Tibial artery (tissue), 4 donors: ENCODE measurements at regions of chr3 and their contacts with region 1.

Region 1: DNA sequence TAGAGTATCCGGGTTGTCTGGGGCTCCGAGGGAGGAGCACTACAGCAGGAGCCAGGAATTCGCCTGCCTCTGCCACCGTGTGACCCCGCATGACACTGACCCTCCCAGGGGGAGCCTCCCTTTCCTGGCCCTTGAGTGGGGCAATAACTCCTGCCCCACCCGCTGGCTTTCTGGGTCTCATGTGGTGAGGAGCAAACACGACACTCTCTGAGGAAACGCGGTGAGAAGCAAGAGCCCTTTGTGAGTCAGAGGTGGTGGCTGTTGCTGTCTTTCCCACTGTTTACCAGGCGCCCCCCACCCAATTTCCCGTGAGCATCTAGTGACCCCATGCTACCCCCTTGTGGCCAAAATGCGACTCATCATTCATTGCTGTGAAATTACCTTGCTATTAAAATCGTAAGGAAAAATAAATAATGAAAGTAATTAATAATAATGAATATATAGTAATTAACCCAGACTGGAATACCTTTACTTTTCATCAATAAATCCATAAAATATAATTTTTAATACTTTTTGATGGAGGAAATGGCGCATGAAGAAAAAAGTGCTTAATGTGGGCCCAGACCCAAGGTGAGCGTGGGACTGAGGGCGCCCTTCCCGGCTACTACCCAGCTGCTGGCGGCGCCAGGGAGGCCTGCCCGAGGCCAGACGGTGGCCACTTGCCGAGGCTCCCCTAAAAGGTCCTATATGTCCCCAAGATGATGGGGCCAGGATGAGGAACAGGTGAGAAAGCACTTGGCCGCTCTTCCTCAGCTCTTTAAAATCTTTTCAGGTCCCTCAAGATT is 29.3 kb downstream of the CCNL1 start:
- DNase-seq: peak; percentile 63 to 76
- H3K4me3 ChIP-seq: no peak overlapping the region
- H3K27ac ChIP-seq: peak overlapping the region; percentile 72 to 87
- H3K4me1 ChIP-seq: peaks cover 0 to 55% (median 42%) of the 10 kb centered on the region in 4 donors
- H3K27me3 ChIP-seq: no peaks in the 10 kb centered on the region
- CTCF ChIP-seq: peak; percentile 32 to 38

Region 2: GRCh38 chr3:156554842-156555687 is 575.6 kb before region 1 on chr3 and contains the start of gene SSR3:
- intact Hi-C with region 1: loop called (anchors 5 kb)
- DNase-seq: peak; percentile 99 to 100
- H3K4me3 ChIP-seq: peak within 1 kb of the TSS; percentile 84 to 85
- H3K27ac ChIP-seq: peak within 1 kb of the TSS; percentile 76 to 85
- H3K4me1 ChIP-seq: peaks cover 0 to 38% (median 19%) of the 10 kb centered on the region in 4 donors
- H3K27me3 ChIP-seq: no peaks in the 10 kb centered on the region
- CTCF ChIP-seq: peak; percentile 46 to 78

Region 3: GRCh38 chr3:156826144-156826895 is 304.3 kb before region 1 on chr3 and contains the start of gene LEKR1:
- intact Hi-C with region 1: loop called (anchors 10 kb)
- DNase-seq: peak; percentile 76 to 91
- H3K4me3 ChIP-seq: peak within 1 kb of the TSS; percentile 67 to 74
- H3K27ac ChIP-seq: peak within 1 kb of the TSS; percentile 84 to 89
- H3K4me1 ChIP-seq: peaks cover 0 to 7% (median 3%) of the 10 kb centered on the region in 4 donors
- H3K27me3 ChIP-seq: no peaks in the 10 kb centered on the region
- CTCF ChIP-seq: no peak

Region 4: DNA sequence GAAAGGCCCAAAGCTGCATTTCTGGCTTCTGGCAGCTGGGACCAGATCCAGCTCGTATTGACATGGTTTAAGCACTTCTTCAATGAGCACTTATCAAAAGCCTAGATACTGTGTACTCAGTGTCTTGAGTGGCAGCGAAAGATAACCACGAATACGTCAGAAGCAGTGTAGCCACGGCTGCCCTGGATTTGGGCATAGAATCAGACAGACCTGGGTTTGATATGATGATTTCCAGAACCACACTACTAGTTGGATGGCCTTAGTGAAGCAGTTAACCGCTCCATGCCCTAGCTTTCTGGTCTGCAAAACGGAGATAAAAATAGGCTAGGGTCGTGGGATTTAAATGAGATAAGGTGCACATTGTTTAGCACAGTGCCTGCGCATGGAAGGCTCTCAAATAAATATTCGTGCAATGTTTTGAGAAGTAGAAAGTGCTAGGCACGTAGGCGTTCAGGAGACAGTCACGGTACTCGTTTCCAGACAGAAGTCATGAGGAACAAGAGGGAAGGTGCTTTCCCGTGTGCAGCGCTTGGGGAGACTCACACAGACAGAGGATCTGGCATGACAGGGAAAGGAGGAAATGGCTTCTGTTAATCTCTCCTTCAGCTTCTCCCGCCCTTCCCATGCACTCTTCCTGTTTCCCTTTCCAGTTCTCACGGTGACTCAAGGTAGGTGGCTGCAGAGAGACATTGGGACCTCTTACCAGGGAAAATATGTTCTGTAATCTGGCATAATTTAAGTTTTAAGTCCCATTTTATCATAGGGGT is 41.0 kb before region 1 on chr3:
- intact Hi-C with region 1: loop called (anchors 2 kb)
- DNase-seq: no peak
- H3K4me3 ChIP-seq: peak overlapping the region; percentile 67 to 76
- H3K27ac ChIP-seq: peak overlapping the region; percentile 99
- H3K4me1 ChIP-seq: peaks cover 0 to 53% (median 34%) of the 10 kb centered on the region in 4 donors
- H3K27me3 ChIP-seq: no peaks in the 10 kb centered on the region
- CTCF ChIP-seq: no peak